ENCODE measurements at regions of chr12 and their contacts with region 1.

Region 1: DNA sequence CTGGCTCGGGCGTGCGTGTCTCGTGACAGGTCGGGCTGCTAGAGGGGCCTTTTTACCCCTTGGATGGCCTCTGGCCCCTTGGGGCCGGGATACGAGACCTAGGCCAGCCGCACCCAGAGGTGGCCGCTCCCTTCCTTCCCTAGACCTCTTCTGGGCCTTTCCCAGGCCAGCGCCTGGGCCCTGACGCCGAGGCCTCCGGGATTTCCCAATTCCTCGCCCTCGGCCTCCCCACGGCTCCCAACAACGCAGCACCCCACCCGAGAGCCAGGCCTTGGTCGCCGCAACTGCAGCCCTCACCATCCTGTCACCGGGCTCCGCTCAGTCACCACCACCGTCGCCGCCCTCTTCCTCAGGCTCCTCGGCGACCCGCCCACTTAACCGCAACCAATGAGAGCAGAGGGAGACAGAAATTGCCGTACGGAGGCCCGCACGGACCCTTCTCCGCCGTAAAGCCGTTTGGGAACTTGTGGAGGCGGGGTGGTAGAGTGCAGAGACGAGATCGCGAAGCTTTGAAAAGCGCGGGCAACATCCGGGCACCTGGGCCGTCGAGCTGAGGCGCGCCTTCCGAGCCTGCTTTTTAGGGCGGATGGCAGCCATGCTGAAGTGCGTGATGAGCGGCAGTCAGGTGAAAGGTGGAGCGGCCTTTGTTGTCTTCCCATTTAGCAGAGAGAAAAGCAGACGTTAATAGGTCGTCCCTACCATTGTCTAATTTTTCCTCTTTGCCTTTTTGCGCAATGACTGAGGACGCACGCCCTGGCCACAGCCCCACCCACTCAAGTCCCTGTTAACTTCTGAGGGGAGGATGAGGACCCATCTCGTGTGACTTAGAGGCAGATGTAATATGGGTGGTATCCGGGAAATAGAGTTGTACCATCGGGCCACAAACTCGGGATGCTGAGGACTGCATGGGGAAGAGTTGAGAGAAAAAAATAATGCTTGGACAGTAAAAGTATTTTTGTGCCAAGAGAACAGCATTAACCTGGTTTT is at the starts of genes RAD9B and VPS29:
- DNase-seq: peak; percentile 100
- H3K4me3 Mint-ChIP-seq: peak within 1 kb of the TSS; percentile 94
- H3K27ac Mint-ChIP-seq: peak within 1 kb of the TSS; percentile 96
- H3K4me1 Mint-ChIP-seq: peaks cover 41% of the 10 kb centered on the region
- H3K27me3 Mint-ChIP-seq: no peaks in the 10 kb centered on the region
- total RNA-seq, gene RAD9B: 0.87 to 0.99 TPM
- total RNA-seq, gene VPS29: 132 to 145 TPM

Region 2: GRCh38 chr12:110513842-110514241 is 11.8 kb after region 1 on chr12:
- CTCF ChIA-PET with region 1: interaction called, 10 read pairs
- POLR2A ChIA-PET with region 1: no interaction called
- DNase-seq: no peak
- H3K4me3 Mint-ChIP-seq: no peak overlapping the region
- H3K27ac Mint-ChIP-seq: no peak overlapping the region
- H3K4me1 Mint-ChIP-seq: no peaks in the 10 kb centered on the region
- H3K27me3 Mint-ChIP-seq: no peaks in the 10 kb centered on the region

Region 3: GRCh38 chr12:110577717-110578521 is 75.9 kb after region 1 on chr12:
- CTCF ChIA-PET with region 1: no interaction called
- POLR2A ChIA-PET with region 1: no interaction called
- DNase-seq: peak; percentile 55
- H3K4me3 Mint-ChIP-seq: peak overlapping the region; percentile 92
- H3K27ac Mint-ChIP-seq: peak overlapping the region; percentile 94
- H3K4me1 Mint-ChIP-seq: peaks cover 65% of the 10 kb centered on the region
- H3K27me3 Mint-ChIP-seq: no peaks in the 10 kb centered on the region